Breast epithelium (tissue), 4 donors: ENCODE measurements at regions of chr4 and their contacts with region 1.

Region 1: GRCh38 chr4:5365071-5366008 is 314.1 kb downstream of the STK32B start:
- DNase-seq: peak in 1 of 2 donors; percentile 21
- H3K4me3 ChIP-seq: no peak overlapping the region
- H3K27ac ChIP-seq: no peak overlapping the region
- H3K4me1 ChIP-seq: no peaks in the 10 kb centered on the region
- H3K27me3 ChIP-seq: no peaks in the 10 kb centered on the region
- CTCF ChIP-seq: no peak
- POLR2A ChIP-seq: no peak

Region 2: DNA sequence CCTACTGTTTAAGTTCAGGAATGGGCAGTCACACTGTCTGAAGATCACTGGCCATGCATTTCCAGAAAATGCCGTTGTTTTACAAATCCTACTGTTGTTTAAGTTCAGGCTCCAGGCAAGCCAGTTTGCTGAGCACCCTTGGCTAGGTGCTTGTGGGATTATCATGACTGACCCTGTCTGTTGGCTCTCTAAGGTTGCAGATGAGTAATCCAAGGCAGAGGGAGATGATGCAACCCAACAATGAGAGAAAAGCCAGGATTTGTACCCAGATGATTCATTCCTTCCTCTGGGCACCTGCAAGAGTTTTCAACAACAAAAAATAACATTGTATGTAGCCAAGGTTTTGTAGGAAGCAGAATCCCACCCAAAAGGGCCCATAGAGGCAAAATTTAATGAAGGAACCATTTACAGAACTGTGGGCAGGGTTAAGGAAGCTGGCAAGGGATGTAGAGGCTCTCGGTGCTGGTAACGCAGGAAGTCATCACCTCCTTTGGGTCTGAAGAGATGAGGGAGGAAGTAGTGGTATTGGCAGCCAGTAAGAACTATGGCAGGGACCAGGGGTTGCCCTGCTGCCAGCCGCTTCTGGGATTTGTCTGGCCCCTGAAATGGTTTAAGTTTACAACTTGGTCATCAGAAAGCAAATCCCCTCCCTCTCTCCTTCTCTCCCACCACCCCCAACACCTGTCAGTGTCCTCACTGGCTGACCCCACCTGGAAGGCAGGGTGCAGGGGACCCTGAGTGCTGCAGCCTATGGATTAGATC is 451.1 kb before region 1 on chr4:
- intact Hi-C with region 1: loop called (anchors 5 kb)
- DNase-seq: no peak
- H3K4me3 ChIP-seq: no peak overlapping the region
- H3K27ac ChIP-seq: no peak overlapping the region
- H3K4me1 ChIP-seq: no peaks in the 10 kb centered on the region
- H3K27me3 ChIP-seq: no peaks in the 10 kb centered on the region
- CTCF ChIP-seq: no peak
- POLR2A ChIP-seq: no peak

Region 3: DNA sequence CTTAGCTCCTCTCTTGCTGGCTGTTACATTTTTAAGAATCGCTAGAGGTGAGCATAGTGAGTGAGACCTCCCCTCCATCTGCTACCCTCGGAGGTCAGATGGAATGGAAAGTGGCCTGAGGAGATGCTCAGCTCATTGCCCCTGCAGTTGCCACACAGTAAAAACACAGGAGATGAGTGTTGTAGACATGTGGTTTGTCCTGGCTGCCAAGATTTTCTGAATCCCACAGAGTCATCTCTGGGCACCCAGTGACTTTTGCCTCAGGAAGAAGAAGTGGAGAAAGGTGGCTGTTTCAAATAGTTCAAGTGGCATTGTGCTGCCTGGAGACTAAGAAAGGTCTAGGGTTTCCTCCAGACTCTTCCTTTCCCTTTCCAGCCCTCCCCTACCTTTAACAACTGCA is 43.0 kb before region 1 on chr4:
- intact Hi-C with region 1: no loop called
- DNase-seq: no peak
- H3K4me3 ChIP-seq: no peak overlapping the region
- H3K27ac ChIP-seq: no peak overlapping the region
- H3K4me1 ChIP-seq: no peaks in the 10 kb centered on the region
- H3K27me3 ChIP-seq: no peaks in the 10 kb centered on the region
- CTCF ChIP-seq: no peak
- POLR2A ChIP-seq: no peak